ENCODE measurements at regions of chr1 and their contacts with region 1.

Region 1: GRCh38 chr1:48236716-48237470 is 14.4 kb downstream of the SLC5A9 start:
- DNase-seq: peak in 7 of 9 donors; percentile 30 to 58 (median 40)
- ATAC-seq: peak; percentile 64
- H3K4me3 ChIP-seq: no peak overlapping the region
- H3K4me3 Mint-ChIP-seq: no peak overlapping the region
- H3K27ac ChIP-seq: no peak overlapping the region
- H3K27ac Mint-ChIP-seq: no peak overlapping the region
- H3K4me1 ChIP-seq: no peaks in the 10 kb centered on the region
- H3K4me1 Mint-ChIP-seq: peaks cover 0 to 2% (median 0%) of the 10 kb centered on the region in 7 donors
- H3K27me3 ChIP-seq: no peaks in the 10 kb centered on the region
- H3K27me3 Mint-ChIP-seq: peaks cover 0 to 11% (median 0%) of the 10 kb centered on the region in 5 donors

Region 2: DNA sequence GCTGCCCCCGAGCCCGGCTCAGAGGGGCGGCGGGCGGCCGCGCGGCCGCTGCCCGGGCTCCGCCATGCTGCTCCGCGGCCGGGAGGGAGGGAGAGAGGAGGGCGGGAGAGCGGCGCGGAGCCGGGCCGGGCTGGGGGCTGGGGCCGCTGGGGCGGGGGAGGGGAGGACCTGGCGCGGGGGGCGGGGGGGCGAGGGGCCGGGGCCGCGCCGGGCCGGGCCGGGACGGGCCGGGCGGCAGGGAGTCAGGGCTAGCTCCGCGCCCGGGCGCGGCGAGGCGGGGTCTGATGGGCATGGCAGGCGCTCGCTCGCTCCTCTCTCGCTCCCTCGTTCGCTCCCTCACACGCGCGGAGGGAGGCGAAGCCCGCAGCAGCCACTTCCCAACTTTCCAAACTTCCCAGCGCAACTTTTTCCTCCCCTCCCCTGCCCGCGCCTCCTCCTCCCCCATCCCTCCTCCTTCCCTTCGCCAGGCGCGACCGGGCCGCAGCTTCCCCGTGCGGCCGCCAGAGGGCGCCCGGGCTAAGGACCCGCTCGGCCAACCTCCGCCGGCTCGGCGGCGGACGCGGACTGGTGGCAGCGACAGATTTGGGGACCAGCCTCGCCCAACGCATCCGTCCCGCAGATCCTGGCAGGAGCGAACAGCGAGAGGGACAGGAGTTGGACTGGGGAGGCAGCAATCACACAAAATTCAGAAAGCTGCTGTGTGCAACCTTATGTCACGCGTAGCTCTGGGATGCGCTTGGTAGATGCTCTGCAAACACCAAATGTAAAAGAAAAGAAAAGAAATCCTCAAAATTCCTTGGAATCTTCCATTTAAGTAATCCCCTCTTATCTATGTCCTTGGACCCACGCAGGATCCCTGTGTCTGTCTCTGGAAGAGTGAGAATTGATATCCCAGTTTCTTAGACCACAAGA is 239.3 kb before region 1 on chr1 and contains the start of gene TRABD2B:
- CTCF ChIA-PET with region 1: no interaction called
- POLR2A ChIA-PET with region 1: no interaction called
- intact Hi-C with region 1: loop called in 1 of 2 experiments (anchors 2 kb)
- DNase-seq: peak; percentile 15 to 80 (median 54)
- ATAC-seq: peak; percentile 79
- H3K4me3 ChIP-seq: no peak within 1 kb of the TSS
- H3K4me3 Mint-ChIP-seq: peak within 1 kb of the TSS; percentile 58 to 93 (median 78)
- H3K27ac ChIP-seq: no peak within 1 kb of the TSS
- H3K27ac Mint-ChIP-seq: no peak within 1 kb of the TSS
- H3K4me1 ChIP-seq: no peaks in the 10 kb centered on the region
- H3K4me1 Mint-ChIP-seq: peaks cover 4 to 14% (median 10%) of the 10 kb centered on the region in 7 donors
- H3K27me3 ChIP-seq: peaks cover 0 to 3% of the 10 kb centered on the region in 2 donors
- H3K27me3 Mint-ChIP-seq: peaks cover 44 to 70% (median 58%) of the 10 kb centered on the region in 5 donors
- total RNA-seq, gene TRABD2B: not detected

Region 3: DNA sequence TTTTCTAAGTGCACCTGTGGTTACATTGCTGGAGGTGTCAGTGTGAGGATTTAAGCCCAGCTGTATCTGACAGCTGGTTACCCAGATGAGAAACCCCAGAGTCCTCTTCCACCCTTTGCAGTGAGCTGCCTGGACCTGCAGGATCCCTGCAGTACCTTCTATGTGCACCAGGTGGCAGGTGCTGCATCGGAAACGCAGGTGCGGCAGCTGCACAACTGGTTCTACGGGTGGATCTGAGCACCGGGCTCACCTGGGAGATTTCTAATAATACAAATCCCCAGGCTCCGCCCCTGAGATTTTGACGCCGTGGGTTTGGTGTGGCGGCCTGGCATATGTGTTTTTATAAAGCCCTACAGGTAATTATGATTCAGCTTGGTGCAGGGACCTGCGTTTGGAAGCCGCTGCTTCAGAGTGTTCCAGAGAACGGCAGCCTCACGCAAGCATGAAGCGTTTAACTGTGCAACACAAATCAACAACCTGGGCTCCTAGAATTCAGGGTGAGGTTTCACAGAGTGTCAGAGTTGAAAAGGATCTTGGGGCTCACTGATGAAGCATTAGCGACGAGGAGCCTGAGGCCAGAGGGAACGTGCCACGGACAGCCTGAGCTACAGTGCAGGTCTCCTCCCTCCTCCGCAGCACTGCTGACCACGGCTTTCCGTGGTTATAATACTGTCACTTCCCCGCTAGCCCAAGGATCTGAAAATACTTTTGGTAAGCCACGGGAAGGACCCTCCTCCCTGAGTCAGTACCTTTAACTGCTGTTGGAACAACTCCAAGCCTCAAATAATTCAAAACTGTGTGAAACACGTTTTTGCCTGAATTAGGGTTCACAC is 143.0 kb before region 1 on chr1:
- CTCF ChIA-PET with region 1: interaction called, 11 read pairs
- POLR2A ChIA-PET with region 1: no interaction called
- intact Hi-C with region 1: loop called (anchors 1 kb)
- DNase-seq: peak; percentile 43 to 78 (median 70)
- ATAC-seq: peak; percentile 81
- H3K4me3 ChIP-seq: peak overlapping the region; percentile 15
- H3K4me3 Mint-ChIP-seq: peak overlapping the region; percentile 1 to 83 (median 76)
- H3K27ac ChIP-seq: no peak overlapping the region
- H3K27ac Mint-ChIP-seq: peak overlapping the region in 1 of 9 donors; percentile 5
- H3K4me1 ChIP-seq: no peaks in the 10 kb centered on the region
- H3K4me1 Mint-ChIP-seq: peaks cover 4 to 9% (median 7%) of the 10 kb centered on the region in 7 donors
- H3K27me3 ChIP-seq: no peaks in the 10 kb centered on the region
- H3K27me3 Mint-ChIP-seq: peaks cover 31 to 70% (median 65%) of the 10 kb centered on the region in 5 donors

Region 4: GRCh38 chr1:48109390-48110013 is 127.4 kb before region 1 on chr1:
- CTCF ChIA-PET with region 1: interaction called, 5 read pairs
- POLR2A ChIA-PET with region 1: no interaction called
- intact Hi-C with region 1: loop called (anchors 1 to 5 kb)
- DNase-seq: peak in 5 of 9 donors; percentile 5 to 29 (median 17)
- ATAC-seq: no peak
- H3K4me3 ChIP-seq: no peak overlapping the region
- H3K4me3 Mint-ChIP-seq: no peak overlapping the region
- H3K27ac ChIP-seq: no peak overlapping the region
- H3K27ac Mint-ChIP-seq: no peak overlapping the region
- H3K4me1 ChIP-seq: no peaks in the 10 kb centered on the region
- H3K4me1 Mint-ChIP-seq: peaks cover 0 to 2% (median 0%) of the 10 kb centered on the region in 7 donors
- H3K27me3 ChIP-seq: no peaks in the 10 kb centered on the region
- H3K27me3 Mint-ChIP-seq: peaks cover 10 to 19% (median 11%) of the 10 kb centered on the region in 5 donors

Region 5: DNA sequence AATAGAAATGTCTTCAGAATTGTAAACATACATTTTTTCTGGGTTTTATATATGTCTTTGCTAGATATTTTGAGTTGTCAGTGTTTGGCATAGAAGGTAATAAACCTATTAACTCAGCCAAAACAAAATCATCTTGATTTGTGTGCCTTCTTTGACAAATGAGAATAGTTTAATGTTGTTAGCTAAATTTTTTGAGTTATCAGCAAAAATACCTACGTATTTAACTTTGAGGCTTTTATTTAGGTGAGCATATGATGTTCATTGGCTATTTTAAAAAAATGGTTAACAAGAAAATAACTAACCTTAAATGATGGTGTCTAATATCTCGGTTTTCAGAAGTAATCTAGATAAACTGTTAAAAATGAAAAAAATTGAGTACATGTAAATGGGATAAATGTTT is 97.6 kb before region 1 on chr1:
- CTCF ChIA-PET with region 1: no interaction called
- POLR2A ChIA-PET with region 1: no interaction called
- intact Hi-C with region 1: no loop called
- DNase-seq: no peak
- ATAC-seq: no peak
- H3K4me3 ChIP-seq: no peak overlapping the region
- H3K4me3 Mint-ChIP-seq: no peak overlapping the region
- H3K27ac ChIP-seq: no peak overlapping the region
- H3K27ac Mint-ChIP-seq: no peak overlapping the region
- H3K4me1 ChIP-seq: no peaks in the 10 kb centered on the region
- H3K4me1 Mint-ChIP-seq: no peaks in the 10 kb centered on the region
- H3K27me3 ChIP-seq: no peaks in the 10 kb centered on the region
- H3K27me3 Mint-ChIP-seq: peaks cover 0 to 57% (median 42%) of the 10 kb centered on the region in 5 donors

Region 6: DNA sequence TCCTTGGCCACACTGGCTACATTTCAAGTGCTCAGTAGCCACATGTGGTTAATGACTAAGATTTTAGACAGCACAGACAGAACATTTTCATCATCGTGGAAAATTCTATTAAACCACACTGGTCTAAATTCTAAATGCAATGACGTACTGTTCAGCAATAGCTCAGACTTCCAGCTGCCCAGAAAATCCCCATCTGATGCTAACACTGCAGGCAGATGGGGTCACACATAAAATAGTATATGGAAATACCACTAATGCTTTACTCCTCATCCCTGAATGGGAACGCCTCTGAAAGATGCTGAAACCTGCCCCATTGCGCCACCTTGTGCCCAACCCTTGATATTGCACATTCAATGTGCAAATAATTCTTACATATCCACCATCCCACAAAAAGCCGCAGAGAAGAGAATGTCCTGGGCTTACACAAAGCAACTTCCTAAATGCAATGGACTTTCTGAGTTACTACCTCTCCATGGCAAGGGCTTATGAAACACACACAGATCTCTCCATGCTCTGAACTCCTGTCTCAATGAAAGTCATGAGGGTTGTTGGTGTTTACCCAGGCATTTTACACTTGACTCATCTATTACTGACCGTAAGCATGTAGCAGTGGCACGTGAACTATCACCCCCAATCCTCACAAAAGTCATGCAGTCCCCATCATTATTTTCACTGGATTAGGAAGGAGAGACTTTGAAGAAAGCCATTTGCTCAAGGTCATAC is 34.7 kb before region 1 on chr1:
- CTCF ChIA-PET with region 1: interaction called, 3 read pairs
- POLR2A ChIA-PET with region 1: no interaction called
- intact Hi-C with region 1: loop called (anchors 1 kb)
- DNase-seq: peak in 8 of 9 donors; percentile 16 to 55 (median 45)
- ATAC-seq: peak; percentile 72
- H3K4me3 ChIP-seq: no peak overlapping the region
- H3K4me3 Mint-ChIP-seq: no peak overlapping the region
- H3K27ac ChIP-seq: no peak overlapping the region
- H3K27ac Mint-ChIP-seq: no peak overlapping the region
- H3K4me1 ChIP-seq: no peaks in the 10 kb centered on the region
- H3K4me1 Mint-ChIP-seq: no peaks in the 10 kb centered on the region
- H3K27me3 ChIP-seq: no peaks in the 10 kb centered on the region
- H3K27me3 Mint-ChIP-seq: peaks cover 0 to 5% (median 0%) of the 10 kb centered on the region in 5 donors

Region 7: DNA sequence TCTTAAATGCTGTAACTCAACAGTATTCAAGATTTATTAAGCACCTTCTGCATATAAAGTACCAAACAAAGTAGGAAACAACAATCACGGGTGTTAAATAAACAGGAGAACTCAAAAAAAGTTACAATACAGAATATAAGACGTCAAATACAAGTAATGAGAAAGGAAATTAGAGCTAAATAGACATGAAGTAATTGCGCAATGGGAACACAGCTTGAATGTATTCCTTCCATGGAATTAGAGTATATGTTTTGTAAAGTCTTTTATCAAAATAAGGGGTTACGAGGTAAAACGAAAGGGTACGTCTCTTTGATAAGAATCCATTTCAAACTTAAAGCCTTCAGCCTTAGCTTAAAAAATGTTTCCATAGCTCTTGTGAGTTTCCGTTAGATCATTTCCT is 126.0 kb after region 1 on chr1:
- CTCF ChIA-PET with region 1: no interaction called
- POLR2A ChIA-PET with region 1: no interaction called
- intact Hi-C with region 1: no loop called
- DNase-seq: no peak
- ATAC-seq: no peak
- H3K4me3 ChIP-seq: no peak overlapping the region
- H3K4me3 Mint-ChIP-seq: no peak overlapping the region
- H3K27ac ChIP-seq: no peak overlapping the region
- H3K27ac Mint-ChIP-seq: no peak overlapping the region
- H3K4me1 ChIP-seq: no peaks in the 10 kb centered on the region
- H3K4me1 Mint-ChIP-seq: no peaks in the 10 kb centered on the region
- H3K27me3 ChIP-seq: no peaks in the 10 kb centered on the region
- H3K27me3 Mint-ChIP-seq: no peaks in the 10 kb centered on the region

Region 8: DNA sequence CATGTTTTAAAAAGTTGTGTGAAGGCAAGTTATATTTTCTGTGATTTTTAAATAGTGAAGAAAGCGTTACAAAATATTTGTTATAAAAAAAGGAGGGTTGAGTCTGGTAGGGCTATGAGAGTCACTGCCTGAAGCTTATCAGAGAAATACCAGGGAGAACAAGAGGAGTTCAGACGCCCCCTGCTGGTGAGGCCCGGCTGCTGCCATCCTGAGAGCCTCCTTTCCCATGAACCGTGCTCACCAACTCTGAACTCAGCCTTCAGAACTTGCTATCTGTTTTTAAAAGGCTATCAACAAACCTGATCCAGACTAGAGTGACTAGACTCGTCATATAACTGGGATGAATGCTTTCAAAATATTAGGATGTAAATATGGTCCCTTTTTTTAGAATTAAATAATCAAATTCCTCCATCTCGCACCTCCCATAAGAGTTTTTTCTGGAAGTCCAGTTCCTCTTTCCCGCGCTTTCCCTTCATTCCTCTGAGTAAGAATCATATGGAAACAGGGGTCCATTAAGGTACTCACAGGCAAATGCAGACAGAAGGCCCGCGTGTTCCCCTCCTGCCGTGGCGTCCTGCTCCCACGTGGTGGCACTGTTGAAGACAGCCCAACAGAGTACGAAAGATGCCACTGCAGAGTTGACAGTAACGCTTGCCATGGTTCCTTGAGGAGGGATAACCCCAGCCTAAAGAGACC is 261.4 kb after region 1 on chr1:
- CTCF ChIA-PET with region 1: no interaction called
- POLR2A ChIA-PET with region 1: no interaction called
- intact Hi-C with region 1: loop called in 1 of 2 experiments (anchors 10 kb)
- DNase-seq: peak; percentile 15 to 70 (median 55)
- ATAC-seq: peak; percentile 87
- H3K4me3 ChIP-seq: no peak overlapping the region
- H3K4me3 Mint-ChIP-seq: peak overlapping the region in 6 of 10 donors; percentile 25 to 63 (median 52)
- H3K27ac ChIP-seq: no peak overlapping the region
- H3K27ac Mint-ChIP-seq: peak overlapping the region in 1 of 9 donors; percentile 28
- H3K4me1 ChIP-seq: peaks cover 0 to 4% of the 10 kb centered on the region in 2 donors
- H3K4me1 Mint-ChIP-seq: peaks cover 5 to 11% (median 7%) of the 10 kb centered on the region in 7 donors
- H3K27me3 ChIP-seq: no peaks in the 10 kb centered on the region
- H3K27me3 Mint-ChIP-seq: peaks cover 0 to 5% (median 1%) of the 10 kb centered on the region in 5 donors

Measured in naive thymus-derived CD4-positive, alpha-beta T cell (primary cell).